ENCODE measurements at regions of chr19 and their contacts with region 1.

Region 1: GRCh38 chr19:43555185-43555770 is 20.0 kb downstream of the XRCC1 start:
- DNase-seq: peak in 5 of 6 donors; percentile 60 to 79 (median 70)
- ATAC-seq: peak; percentile 71 to 95 (median 88)
- H3K4me3 ChIP-seq: no peak overlapping the region
- H3K27ac ChIP-seq: no peak overlapping the region
- H3K4me1 ChIP-seq: no peaks in the 10 kb centered on the region
- H3K27me3 ChIP-seq: no peaks in the 10 kb centered on the region
- CTCF ChIP-seq: peak; percentile 29 to 63 (median 45)

Region 2: DNA sequence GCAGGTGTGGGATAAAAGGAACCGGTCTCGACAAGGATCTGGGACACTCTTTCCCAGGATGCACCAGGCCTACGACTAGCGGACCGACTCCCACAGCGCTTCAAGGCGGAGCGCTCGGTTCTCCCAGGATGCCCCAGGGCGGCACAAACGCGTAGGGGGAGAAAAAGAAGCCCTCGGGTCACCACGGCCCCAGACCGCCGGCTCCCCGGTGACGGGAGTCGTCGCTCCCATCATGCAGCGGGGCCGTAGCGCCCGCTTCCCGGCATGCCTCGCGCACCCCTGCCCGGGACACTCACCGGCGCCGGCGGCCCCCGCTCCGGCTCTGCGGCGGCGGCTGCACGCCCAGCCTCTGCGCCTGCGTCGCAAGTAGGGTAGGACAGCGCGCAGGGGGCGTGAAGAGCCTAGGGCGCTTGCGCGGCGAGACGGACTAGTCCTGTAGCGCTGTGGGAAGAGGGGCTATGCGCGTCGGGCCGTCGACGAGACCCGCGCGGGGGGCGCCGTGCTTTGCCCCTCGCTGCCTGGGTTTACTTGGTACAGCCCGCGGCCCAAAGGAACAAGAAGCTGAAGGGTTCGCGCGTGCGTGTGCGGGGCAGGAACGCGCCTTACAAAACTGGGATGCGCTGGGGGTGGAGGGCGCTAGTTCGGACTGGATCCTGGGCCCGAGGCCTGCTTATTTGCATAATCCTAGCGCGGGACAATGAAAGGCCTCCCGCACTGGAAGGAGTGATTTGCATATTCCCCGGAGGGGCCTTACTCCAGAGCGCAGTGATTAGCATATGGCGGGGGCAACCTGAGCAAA is 64.2 kb after region 1 on chr19 and contains the start of gene ZNF428:
- intact Hi-C with region 1: no loop called
- DNase-seq: peak; percentile 76 to 94 (median 82)
- ATAC-seq: peak; percentile 87 to 95 (median 89)
- H3K4me3 ChIP-seq: peak within 1 kb of the TSS; percentile 69 to 80 (median 70)
- H3K27ac ChIP-seq: peak within 1 kb of the TSS; percentile 90 to 94 (median 91)
- H3K4me1 ChIP-seq: peaks cover 0 to 7% (median 0%) of the 10 kb centered on the region in 3 donors
- H3K27me3 ChIP-seq: no peaks in the 10 kb centered on the region
- CTCF ChIP-seq: no peak
- total RNA-seq, gene ZNF428: 12.0 to 23.7 (median 17.4) TPM

Region 3: DNA sequence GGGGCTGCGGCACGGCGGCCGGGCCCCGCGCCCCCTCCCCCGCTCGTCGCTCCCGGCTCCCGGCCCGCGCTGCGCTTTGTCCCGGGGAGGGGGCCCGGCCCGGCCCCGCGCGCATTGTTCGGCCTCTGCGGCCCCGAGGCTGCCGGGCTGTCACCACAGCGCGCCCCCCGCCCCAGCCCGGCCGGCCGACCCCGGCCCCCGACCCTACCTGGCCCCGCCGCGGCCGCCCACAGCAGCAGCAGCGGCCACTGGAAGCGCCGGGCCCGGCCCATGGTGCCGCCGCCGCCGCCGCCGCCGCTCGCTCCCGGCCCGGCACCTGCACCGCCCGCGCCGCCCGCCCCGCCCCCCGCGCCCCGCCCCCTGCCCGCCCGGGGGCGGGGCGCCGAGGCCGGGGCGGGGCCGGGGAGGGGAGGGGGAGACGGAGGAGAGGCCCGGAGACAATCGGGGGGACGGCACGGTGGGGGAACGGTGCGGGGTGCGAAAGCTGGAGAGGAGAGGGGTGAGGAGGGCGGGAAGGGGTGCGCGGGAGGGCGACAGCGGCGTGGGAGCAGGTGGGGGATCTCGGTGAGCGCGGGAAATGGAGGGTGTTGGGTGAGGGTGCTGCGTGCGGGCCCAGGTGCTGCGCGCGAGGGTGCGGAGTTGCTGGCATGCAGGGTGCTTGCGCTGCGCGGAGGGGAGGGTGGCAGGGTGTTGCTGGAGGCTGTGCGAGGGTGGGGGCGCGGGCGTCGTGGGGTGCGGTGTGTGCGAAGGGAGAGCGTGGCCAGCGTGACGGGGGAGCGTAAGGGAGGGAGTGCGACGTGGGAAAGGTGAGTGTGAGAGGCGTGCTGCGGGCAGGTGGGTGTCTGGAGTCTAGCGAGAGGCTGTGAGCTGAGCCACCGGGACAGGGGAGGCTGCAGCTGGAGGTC is 84.5 kb after region 1 on chr19 and contains the start of gene CADM4:
- intact Hi-C with region 1: loop called in 1 of 3 experiments (anchors 10 kb)
- DNase-seq: peak; percentile 41 to 82 (median 58)
- ATAC-seq: peak; percentile 87 to 93 (median 89)
- H3K4me3 ChIP-seq: peak within 1 kb of the TSS; percentile 26 to 53 (median 47)
- H3K27ac ChIP-seq: no peak within 1 kb of the TSS
- H3K4me1 ChIP-seq: no peaks in the 10 kb centered on the region
- H3K27me3 ChIP-seq: no peaks in the 10 kb centered on the region
- CTCF ChIP-seq: no peak
- total RNA-seq, gene CADM4: 5.9 to 11.3 (median 7.5) TPM

Region 4: GRCh38 chr19:43662487-43662886 is 107.2 kb after region 1 on chr19:
- intact Hi-C with region 1: loop called in 1 of 3 experiments (anchors 5 kb)
- DNase-seq: no peak
- ATAC-seq: peak in 2 of 4 donors; percentile 30 to 34
- H3K4me3 ChIP-seq: no peak overlapping the region
- H3K27ac ChIP-seq: no peak overlapping the region
- H3K4me1 ChIP-seq: no peaks in the 10 kb centered on the region
- H3K27me3 ChIP-seq: no peaks in the 10 kb centered on the region
- CTCF ChIP-seq: no peak

Region 5: GRCh38 chr19:43674596-43674995 is 119.3 kb after region 1 on chr19:
- intact Hi-C with region 1: no loop called
- DNase-seq: peak in 1 of 6 donors; percentile 30
- ATAC-seq: peak in 2 of 4 donors; percentile 30 to 43
- H3K4me3 ChIP-seq: no peak overlapping the region
- H3K27ac ChIP-seq: peak overlapping the region in 2 of 4 donors; percentile 70 to 78
- H3K4me1 ChIP-seq: peaks cover 0 to 2% (median 0%) of the 10 kb centered on the region in 3 donors
- H3K27me3 ChIP-seq: no peaks in the 10 kb centered on the region
- CTCF ChIP-seq: no peak